Sigmoid colon (tissue), 7 donors: ENCODE measurements at regions of chr9 and their contacts with region 1.

Region 1: DNA sequence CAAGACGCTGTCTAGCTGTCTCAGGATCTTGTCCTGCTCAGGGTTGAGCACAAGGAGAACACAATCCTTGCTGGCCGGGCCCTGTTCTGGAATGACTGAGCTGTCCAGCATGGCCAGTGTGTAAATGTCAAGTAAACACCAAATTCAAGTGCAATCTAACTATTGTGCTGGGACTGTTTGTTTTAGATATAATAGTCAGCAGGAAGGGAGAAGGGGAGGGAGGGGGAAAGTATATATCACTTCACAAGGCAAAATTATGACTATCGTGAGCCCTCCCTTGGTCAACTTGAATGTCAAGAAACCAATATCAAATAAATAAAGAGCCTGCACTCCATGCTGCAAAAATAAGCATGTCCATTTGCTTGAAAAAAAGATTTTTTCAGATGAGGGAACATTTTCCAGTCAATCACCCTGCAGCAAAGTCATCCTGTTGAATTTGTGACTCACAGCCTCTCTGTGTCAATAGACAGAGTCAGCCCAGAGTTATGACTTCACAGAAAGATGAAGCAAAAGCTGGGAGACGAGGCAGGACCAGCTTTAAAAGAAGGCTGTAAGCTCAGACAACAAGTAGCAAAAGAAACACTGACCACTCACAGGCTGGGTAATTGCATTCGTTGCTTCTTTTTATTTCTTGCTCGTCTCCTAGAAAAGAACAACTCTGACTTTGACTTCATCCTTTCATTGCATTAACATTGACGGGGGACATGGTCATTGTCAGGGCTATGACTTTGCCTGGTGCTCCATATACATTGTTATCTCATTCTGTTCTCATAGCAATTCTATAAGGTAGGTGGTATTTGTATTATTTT is 15.2 kb upstream of the KLF4 start:
- DNase-seq: no peak
- H3K4me3 ChIP-seq: no peak overlapping the region
- H3K27ac ChIP-seq: peak overlapping the region in 1 of 4 donors; percentile 58
- H3K4me1 ChIP-seq: no peaks in the 10 kb centered on the region
- H3K27me3 ChIP-seq: no peaks in the 10 kb centered on the region
- CTCF ChIP-seq: no peak
- EP300 ChIP-seq: no peak
- POLR2A ChIP-seq: no peak

Region 2: GRCh38 chr9:107340920-107341632 is 163.7 kb before region 1 on chr9:
- intact Hi-C with region 1: no loop called
- DNase-seq: peak; percentile 83
- H3K4me3 ChIP-seq: no peak overlapping the region
- H3K27ac ChIP-seq: no peak overlapping the region
- H3K4me1 ChIP-seq: peaks cover 0 to 13% (median 3%) of the 10 kb centered on the region in 4 donors
- H3K27me3 ChIP-seq: no peaks in the 10 kb centered on the region
- CTCF ChIP-seq: peak; percentile 65 to 91 (median 80)
- EP300 ChIP-seq: no peak
- POLR2A ChIP-seq: no peak

Region 3: GRCh38 chr9:107576962-107577776 is 72.4 kb after region 1 on chr9:
- intact Hi-C with region 1: loop called (anchors 10 kb)
- DNase-seq: no peak
- H3K4me3 ChIP-seq: no peak overlapping the region
- H3K27ac ChIP-seq: no peak overlapping the region
- H3K4me1 ChIP-seq: no peaks in the 10 kb centered on the region
- H3K27me3 ChIP-seq: no peaks in the 10 kb centered on the region
- CTCF ChIP-seq: no peak
- EP300 ChIP-seq: no peak
- POLR2A ChIP-seq: no peak